IMR-90 (cell line): ENCODE measurements at regions of chr3 and their contacts with region 1.

Region 1: GRCh38 chr3:120558771-120559241 is 37.3 kb upstream of the NDUFB4 start:
- DNase-seq: peak; percentile 84
- ATAC-seq: peak; percentile 73
- H3K4me3 ChIP-seq: peak overlapping the region; percentile 88
- H3K27ac ChIP-seq: peak overlapping the region; percentile 73
- H3K4me1 ChIP-seq: peaks cover 6% of the 10 kb centered on the region
- H3K27me3 ChIP-seq: no peaks in the 10 kb centered on the region
- CTCF ChIP-seq: peak; percentile 98
- POLR2A ChIP-seq: peak; percentile 51
- RAD21 ChIP-seq: peak; percentile 94

Region 2: GRCh38 chr3:120239644-120240043 is 319.2 kb before region 1 on chr3:
- CTCF ChIA-PET with region 1: interaction called, 23 read pairs
- POLR2A ChIA-PET with region 1: no interaction called
- dilution Hi-C with region 1: no loop called
- in situ Hi-C with region 1: loop called (anchors 5 kb)
- intact Hi-C with region 1: loop called (anchors 1 kb)
- DNase-seq: no peak
- ATAC-seq: no peak
- H3K4me3 ChIP-seq: no peak overlapping the region
- H3K27ac ChIP-seq: no peak overlapping the region
- H3K4me1 ChIP-seq: no peaks in the 10 kb centered on the region; the same call in 1 of the 2 replicates
- H3K27me3 ChIP-seq: peaks cover 14% of the 10 kb centered on the region
- CTCF ChIP-seq: no peak
- POLR2A ChIP-seq: no peak
- RAD21 ChIP-seq: no peak

Region 3: GRCh38 chr3:120417272-120417911 is 141.4 kb before region 1 on chr3:
- CTCF ChIA-PET with region 1: interaction called, 25 read pairs
- POLR2A ChIA-PET with region 1: no interaction called
- dilution Hi-C with region 1: no loop called
- in situ Hi-C with region 1: loop called (anchors 10 kb)
- intact Hi-C with region 1: loop called (anchors 1 kb)
- DNase-seq: peak; percentile 99
- ATAC-seq: peak; percentile 90
- H3K4me3 ChIP-seq: no peak overlapping the region
- H3K27ac ChIP-seq: peak overlapping the region; percentile 79; the same call in 1 of the 2 replicates
- H3K4me1 ChIP-seq: peaks cover 29% of the 10 kb centered on the region
- H3K27me3 ChIP-seq: no peaks in the 10 kb centered on the region
- CTCF ChIP-seq: peak; percentile 87
- POLR2A ChIP-seq: no peak
- RAD21 ChIP-seq: peak; percentile 66

Region 4: DNA sequence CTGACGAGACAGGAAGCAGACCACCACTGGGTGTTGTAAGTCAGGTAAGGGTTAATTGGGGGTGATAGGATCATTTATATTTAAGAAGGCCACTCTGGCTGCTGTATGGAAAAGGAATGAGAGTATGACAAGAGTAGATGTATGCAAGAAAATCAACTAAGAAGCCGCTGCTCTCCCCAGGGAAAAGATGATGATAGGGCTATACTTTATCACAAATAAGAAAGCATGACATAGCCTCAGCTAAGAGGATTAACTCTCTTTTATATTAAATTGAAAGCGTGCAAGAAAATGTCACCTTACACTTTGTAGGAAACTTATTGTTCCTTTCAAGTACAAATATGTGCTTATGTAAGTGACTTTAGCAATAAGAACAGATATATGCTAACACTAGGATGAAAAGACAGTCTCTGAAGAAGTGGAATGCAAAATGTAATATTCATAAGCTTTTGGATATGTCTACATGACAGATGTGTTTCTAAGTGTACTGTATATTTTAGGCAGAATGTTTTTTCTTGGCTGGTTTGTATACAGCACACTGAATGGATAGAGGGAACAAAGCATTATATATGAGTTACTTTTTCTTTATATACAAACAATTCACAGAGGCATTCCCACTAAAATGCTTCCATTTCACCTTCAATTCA is 28.6 kb after region 1 on chr3:
- CTCF ChIA-PET with region 1: no interaction called
- POLR2A ChIA-PET with region 1: no interaction called
- dilution Hi-C with region 1: no loop called
- in situ Hi-C with region 1: no loop called
- intact Hi-C with region 1: no loop called
- DNase-seq: no peak
- ATAC-seq: no peak
- H3K4me3 ChIP-seq: no peak overlapping the region
- H3K27ac ChIP-seq: no peak overlapping the region
- H3K4me1 ChIP-seq: no peaks in the 10 kb centered on the region
- H3K27me3 ChIP-seq: peaks cover 1% of the 10 kb centered on the region
- CTCF ChIP-seq: no peak
- POLR2A ChIP-seq: no peak
- RAD21 ChIP-seq: no peak

Region 5: DNA sequence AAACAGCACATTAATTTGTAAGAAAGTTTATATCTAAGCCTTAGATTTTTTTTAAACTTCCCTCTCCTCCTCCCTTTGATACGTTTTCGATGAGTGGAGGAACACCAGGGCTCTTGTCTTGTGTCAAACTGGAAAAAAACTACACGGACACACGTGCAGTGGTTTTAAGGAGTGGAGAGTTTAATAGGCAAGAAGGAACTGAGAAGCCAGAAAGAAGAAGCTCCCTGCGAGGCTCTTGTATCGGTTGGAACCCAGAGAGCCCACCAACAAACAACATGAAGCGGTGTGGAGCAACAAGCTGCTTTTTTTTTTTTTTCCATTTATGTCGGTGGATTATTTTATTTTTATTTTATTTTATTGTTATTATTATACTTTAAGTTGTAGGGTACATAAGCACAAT is 56.0 kb after region 1 on chr3:
- CTCF ChIA-PET with region 1: no interaction called
- POLR2A ChIA-PET with region 1: no interaction called
- dilution Hi-C with region 1: no loop called
- in situ Hi-C with region 1: no loop called
- intact Hi-C with region 1: no loop called
- DNase-seq: no peak
- ATAC-seq: no peak
- H3K4me3 ChIP-seq: no peak overlapping the region
- H3K27ac ChIP-seq: no peak overlapping the region
- H3K4me1 ChIP-seq: peaks cover 2% of the 10 kb centered on the region; the same call in 1 of the 2 replicates
- H3K27me3 ChIP-seq: no peaks in the 10 kb centered on the region
- CTCF ChIP-seq: no peak
- POLR2A ChIP-seq: no peak
- RAD21 ChIP-seq: no peak

Region 6: GRCh38 chr3:120688121-120688520 is 129.3 kb after region 1 on chr3:
- CTCF ChIA-PET with region 1: no interaction called
- POLR2A ChIA-PET with region 1: no interaction called
- dilution Hi-C with region 1: no loop called
- in situ Hi-C with region 1: no loop called
- intact Hi-C with region 1: loop called (anchors 1 kb)
- DNase-seq: peak; percentile 79
- ATAC-seq: peak; percentile 94
- H3K4me3 ChIP-seq: no peak overlapping the region
- H3K27ac ChIP-seq: peak overlapping the region; percentile 44; the same call in 1 of the 2 replicates
- H3K4me1 ChIP-seq: peaks cover 8% of the 10 kb centered on the region
- H3K27me3 ChIP-seq: no peaks in the 10 kb centered on the region
- CTCF ChIP-seq: no peak
- POLR2A ChIP-seq: no peak
- RAD21 ChIP-seq: no peak

Region 7: GRCh38 chr3:120908030-120908794 is 349.4 kb after region 1 on chr3 and contains the start of gene STXBP5L:
- CTCF ChIA-PET with region 1: no interaction called
- POLR2A ChIA-PET with region 1: no interaction called
- dilution Hi-C with region 1: no loop called
- in situ Hi-C with region 1: no loop called
- intact Hi-C with region 1: loop called (anchors 5 kb)
- DNase-seq: peak; percentile 52
- ATAC-seq: peak; percentile 100
- H3K4me3 ChIP-seq: peak within 1 kb of the TSS; percentile 9; the same call in 1 of the 2 replicates
- H3K27ac ChIP-seq: no peak within 1 kb of the TSS
- H3K4me1 ChIP-seq: no peaks in the 10 kb centered on the region
- H3K27me3 ChIP-seq: peaks cover 12% of the 10 kb centered on the region
- CTCF ChIP-seq: no peak
- POLR2A ChIP-seq: no peak
- RAD21 ChIP-seq: no peak
- total RNA-seq, gene STXBP5L: not detected in 2 replicates

Region 8: DNA sequence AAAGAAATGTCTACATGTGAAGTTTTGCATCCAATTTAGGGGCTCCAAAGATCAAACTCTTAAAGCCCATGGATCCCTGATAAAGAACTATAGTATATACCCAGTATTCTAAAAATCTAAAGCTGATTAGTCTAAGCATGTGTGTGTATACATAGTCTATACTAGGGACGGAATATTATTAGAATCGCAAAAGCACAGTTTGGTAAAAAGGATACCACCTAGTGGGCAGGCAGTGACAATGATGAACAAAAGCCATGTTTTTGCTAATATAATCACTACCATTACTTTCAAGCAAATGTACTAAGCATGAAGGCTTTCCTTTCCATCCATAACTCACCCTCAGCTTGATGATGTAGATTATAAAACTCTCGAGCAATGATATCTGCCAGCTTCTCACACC is 970.5 kb after region 1 on chr3:
- CTCF ChIA-PET with region 1: no interaction called
- POLR2A ChIA-PET with region 1: no interaction called
- dilution Hi-C with region 1: no loop called
- in situ Hi-C with region 1: no loop called
- intact Hi-C with region 1: loop called (anchors 2 kb)
- DNase-seq: peak; percentile 35
- ATAC-seq: peak; percentile 78
- H3K4me3 ChIP-seq: no peak overlapping the region
- H3K27ac ChIP-seq: no peak overlapping the region
- H3K4me1 ChIP-seq: no peaks in the 10 kb centered on the region
- H3K27me3 ChIP-seq: no peaks in the 10 kb centered on the region
- CTCF ChIP-seq: peak; percentile 60
- POLR2A ChIP-seq: no peak
- RAD21 ChIP-seq: peak; percentile 55